Posterior vena cava (tissue), 2 donors: ENCODE measurements at regions of chr17 and their contacts with region 1.

Region 1: DNA sequence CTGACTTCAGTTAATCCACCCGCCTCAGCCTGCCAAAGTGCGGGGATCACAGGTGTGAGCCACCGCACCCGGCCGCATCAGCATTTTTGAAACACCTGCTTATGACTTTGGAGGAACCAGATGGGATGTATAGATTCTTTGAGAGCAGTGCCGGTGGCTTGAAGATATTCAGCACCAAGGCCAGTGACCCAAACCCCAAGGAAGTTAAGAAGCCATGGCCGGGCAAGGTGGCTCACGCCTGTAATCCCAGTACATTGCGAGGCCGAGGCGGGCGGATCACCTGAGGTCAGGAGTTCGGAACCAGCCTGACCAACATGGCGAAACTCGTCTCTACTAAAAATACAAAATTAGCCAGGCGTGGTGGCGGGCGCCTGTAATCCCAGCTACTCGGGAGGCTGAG is 43.9 kb downstream of the TRARG1 start:
- DNase-seq: no peak

Region 2: DNA sequence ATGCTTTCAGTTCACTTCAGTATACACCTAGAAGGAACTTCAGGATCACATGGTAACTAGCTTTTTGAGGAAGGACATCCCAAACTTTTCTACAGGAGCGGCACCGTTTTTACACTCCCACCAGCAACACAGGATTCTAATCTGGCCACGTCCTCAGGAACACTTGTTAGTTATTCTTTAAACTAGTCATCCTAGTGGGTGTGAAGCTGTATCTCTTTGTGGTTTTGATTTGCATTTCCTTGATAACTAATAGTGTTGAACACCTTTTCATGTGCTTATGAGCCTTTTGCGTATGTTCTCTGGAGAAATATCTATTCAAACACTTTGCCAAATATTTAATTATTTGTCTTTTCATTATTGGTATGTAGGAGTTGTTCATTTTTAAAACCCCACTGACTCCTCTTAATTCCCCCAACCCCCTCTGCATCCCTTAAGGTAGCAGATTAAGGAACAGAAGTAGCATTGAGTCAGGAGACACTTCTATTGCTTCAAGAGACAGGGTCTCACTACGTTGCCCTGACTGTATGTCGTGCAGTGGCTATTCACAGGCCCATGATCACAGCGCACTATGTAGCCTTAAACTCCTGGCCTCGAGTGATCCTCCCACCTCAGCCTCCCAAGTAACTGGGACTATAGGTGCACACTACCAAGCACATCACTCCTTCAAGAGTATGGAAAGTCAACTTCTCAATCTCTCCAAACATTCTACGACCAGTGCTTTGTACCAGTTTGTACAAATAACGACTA is 51.3 kb after region 1 on chr17:
- intact Hi-C with region 1: loop called in 1 of 2 experiments (anchors 2 kb)
- DNase-seq: no peak